ENCODE measurements at regions of chr1 and their contacts with region 1.

Region 1: DNA sequence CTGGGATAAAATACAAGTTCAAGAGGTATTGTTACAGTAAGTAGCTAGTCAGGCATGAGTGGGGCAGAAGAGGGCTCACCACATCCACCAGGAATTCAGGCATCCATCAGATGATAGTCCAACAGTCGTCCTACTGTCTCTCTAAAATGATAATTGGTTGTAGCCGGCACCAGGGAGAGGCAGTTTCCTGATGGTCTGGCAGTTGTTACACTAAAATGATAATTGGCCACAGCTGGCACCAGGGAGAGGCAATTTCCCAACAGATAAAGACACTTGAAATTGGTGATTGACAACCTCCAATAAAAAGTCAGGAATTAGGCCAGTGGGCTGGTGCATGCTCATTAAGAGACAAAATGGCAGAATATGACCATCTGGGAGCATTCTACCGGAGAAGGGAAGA is 545.8 kb downstream of the AMY1C start:
- DNase-seq: no peak
- H3K4me3 ChIP-seq: no peak overlapping the region
- H3K27ac ChIP-seq: no peak overlapping the region
- H3K4me1 ChIP-seq: no peaks in the 10 kb centered on the region
- H3K27me3 ChIP-seq: no peaks in the 10 kb centered on the region
- CTCF ChIP-seq: no peak

Region 2: DNA sequence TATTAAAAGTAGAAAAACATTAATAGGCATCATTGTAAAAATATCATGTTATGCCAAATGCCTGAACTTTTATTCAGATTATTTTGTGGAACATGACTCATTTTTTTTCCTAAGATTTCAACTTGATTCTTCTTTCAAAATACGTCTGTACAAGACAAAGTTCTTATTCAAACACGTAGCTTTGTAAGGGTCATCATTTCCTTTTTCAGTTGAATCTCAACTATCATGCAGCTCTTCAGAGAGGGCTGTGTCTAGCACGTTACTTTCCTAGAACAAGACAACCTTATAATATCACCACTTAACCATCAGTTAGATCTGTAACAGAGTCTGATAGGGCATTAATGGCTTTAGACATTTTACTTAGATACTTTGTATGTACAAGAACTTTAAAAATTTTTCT is 63.1 kb after region 1 on chr1:
- CTCF ChIA-PET with region 1: no interaction called
- dilution Hi-C with region 1: loop called (anchors 5 kb)
- in situ Hi-C with region 1: no loop called
- intact Hi-C with region 1: no loop called
- DNase-seq: no peak
- H3K4me3 ChIP-seq: no peak overlapping the region
- H3K27ac ChIP-seq: no peak overlapping the region
- H3K4me1 ChIP-seq: no peaks in the 10 kb centered on the region
- H3K27me3 ChIP-seq: no peaks in the 10 kb centered on the region
- CTCF ChIP-seq: no peak